CD8-positive, alpha-beta T cell (primary cell): ENCODE measurements at regions of chr12 and their contacts with region 1.

Region 1: DNA sequence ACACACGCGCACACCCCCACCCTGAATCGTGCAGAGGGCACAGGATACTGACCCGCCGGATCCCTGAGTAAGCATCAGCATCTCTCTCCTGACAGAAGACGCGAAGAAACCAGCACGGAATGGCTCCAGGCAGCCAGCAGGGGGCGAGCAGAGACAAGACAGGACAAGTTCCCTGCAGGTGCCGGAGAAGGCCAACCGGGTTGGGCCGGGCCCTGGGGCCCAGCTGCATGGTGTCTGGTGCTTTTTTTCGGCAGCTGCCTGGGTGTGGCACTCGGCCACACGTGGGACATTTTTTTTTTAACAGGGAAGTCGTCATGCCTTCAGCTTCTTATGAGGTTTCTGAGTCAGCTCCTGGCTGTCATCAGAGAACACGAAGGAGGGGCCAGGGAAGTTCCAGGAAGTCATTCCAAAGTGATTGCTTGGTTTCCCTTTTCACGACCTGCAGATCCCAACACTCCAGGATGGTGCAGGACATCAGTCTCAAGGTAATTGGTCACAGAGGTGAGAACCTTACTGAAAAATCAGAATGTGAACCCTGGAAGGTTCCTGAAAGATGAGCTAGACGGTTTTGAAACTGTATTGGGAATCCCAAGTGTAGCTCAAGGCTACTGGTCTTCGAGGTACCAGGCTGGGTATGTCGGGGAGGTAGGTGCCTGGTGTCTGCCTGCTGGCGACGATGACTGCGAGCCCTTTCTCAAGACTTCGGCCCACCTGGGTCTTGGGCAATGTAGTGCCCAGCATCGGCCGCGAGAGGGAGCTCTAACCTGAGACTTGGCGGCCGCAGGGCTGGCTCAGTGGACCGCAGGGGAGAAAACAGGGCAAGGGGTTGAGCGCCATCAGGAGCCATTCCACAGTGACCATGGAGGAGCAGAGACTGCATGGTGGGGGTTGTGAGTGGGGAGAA is 190.8 kb upstream of the PRMT8 start:
- DNase-seq: peak; percentile 58 to 83 (median 77)
- ATAC-seq: peak; percentile 84
- H3K4me3 ChIP-seq: peak overlapping the region; percentile 4
- H3K4me3 Mint-ChIP-seq: peak overlapping the region; percentile 57
- H3K27ac ChIP-seq: no peak overlapping the region
- H3K27ac Mint-ChIP-seq: peak overlapping the region; percentile 70
- H3K4me1 ChIP-seq: peaks cover 9% of the 10 kb centered on the region
- H3K4me1 Mint-ChIP-seq: peaks cover 10% of the 10 kb centered on the region
- H3K27me3 ChIP-seq: no peaks in the 10 kb centered on the region
- H3K27me3 Mint-ChIP-seq: peaks cover 11% of the 10 kb centered on the region
- CTCF ChIP-seq: peak; percentile 78

Region 2: GRCh38 chr12:3275171-3276041 is 24.8 kb before region 1 on chr12:
- CTCF ChIA-PET with region 1: interaction called, 51 read pairs
- POLR2A ChIA-PET with region 1: no interaction called
- intact Hi-C with region 1: no loop called
- DNase-seq: peak; percentile 40 to 84 (median 64)
- ATAC-seq: peak; percentile 58
- H3K4me3 ChIP-seq: no peak overlapping the region
- H3K4me3 Mint-ChIP-seq: peak overlapping the region; percentile 22
- H3K27ac ChIP-seq: no peak overlapping the region
- H3K27ac Mint-ChIP-seq: no peak overlapping the region
- H3K4me1 ChIP-seq: no peaks in the 10 kb centered on the region
- H3K4me1 Mint-ChIP-seq: no peaks in the 10 kb centered on the region
- H3K27me3 ChIP-seq: no peaks in the 10 kb centered on the region
- H3K27me3 Mint-ChIP-seq: peaks cover 21% of the 10 kb centered on the region
- CTCF ChIP-seq: peak; percentile 89

Region 3: GRCh38 chr12:3288690-3289089 is 11.5 kb before region 1 on chr12:
- CTCF ChIA-PET with region 1: interaction called, 49 read pairs
- POLR2A ChIA-PET with region 1: no interaction called
- intact Hi-C with region 1: no loop called
- DNase-seq: no peak
- ATAC-seq: no peak
- H3K4me3 ChIP-seq: no peak overlapping the region
- H3K4me3 Mint-ChIP-seq: no peak overlapping the region
- H3K27ac ChIP-seq: no peak overlapping the region
- H3K27ac Mint-ChIP-seq: peak overlapping the region; percentile 49
- H3K4me1 ChIP-seq: no peaks in the 10 kb centered on the region
- H3K4me1 Mint-ChIP-seq: no peaks in the 10 kb centered on the region
- H3K27me3 ChIP-seq: no peaks in the 10 kb centered on the region
- H3K27me3 Mint-ChIP-seq: no peaks in the 10 kb centered on the region
- CTCF ChIP-seq: no peak

Region 4: GRCh38 chr12:3313675-3314663 is 13.8 kb after region 1 on chr12:
- CTCF ChIA-PET with region 1: interaction called, 80 read pairs
- POLR2A ChIA-PET with region 1: no interaction called
- intact Hi-C with region 1: no loop called
- DNase-seq: peak in 4 of 9 experiments; percentile 25 to 47 (median 32)
- ATAC-seq: no peak
- H3K4me3 ChIP-seq: no peak overlapping the region
- H3K4me3 Mint-ChIP-seq: no peak overlapping the region
- H3K27ac ChIP-seq: no peak overlapping the region
- H3K27ac Mint-ChIP-seq: no peak overlapping the region
- H3K4me1 ChIP-seq: no peaks in the 10 kb centered on the region
- H3K4me1 Mint-ChIP-seq: no peaks in the 10 kb centered on the region
- H3K27me3 ChIP-seq: no peaks in the 10 kb centered on the region
- H3K27me3 Mint-ChIP-seq: no peaks in the 10 kb centered on the region
- CTCF ChIP-seq: no peak

Region 5: DNA sequence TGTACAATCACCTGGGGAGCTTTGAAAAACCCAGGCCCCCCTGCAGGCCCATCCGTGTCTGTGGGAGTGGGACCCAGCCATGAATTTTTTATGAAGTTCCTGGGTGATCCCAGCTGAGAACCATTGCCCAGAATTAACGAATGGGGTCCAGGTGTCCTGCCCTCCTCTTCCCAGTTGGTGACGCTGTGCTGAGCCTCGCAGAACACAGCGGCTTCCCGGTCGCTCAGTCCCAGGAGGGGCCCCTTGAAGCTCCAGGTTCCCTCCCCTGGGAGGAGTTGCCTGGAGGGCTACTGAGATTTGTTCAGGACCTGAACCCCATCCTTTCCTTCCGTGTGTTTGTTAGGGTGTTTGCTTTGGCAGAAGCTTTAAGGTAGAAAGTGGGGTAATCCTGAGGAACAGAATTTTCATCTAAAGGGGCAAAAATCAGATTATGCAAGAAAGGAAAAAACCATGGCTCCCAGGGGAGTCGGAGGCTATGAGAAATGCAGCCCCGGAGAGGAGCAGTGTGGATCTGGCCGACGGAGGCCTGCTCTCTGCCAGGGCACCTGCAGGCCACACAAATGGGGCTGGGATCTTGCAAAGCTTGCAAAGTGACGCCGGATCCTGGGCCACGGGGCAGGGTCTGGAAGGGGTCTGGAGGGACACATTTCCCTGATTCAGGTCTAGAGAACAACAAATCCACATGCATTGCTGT is 26.1 kb after region 1 on chr12:
- CTCF ChIA-PET with region 1: interaction called, 16 read pairs
- POLR2A ChIA-PET with region 1: no interaction called
- intact Hi-C with region 1: no loop called
- DNase-seq: no peak
- ATAC-seq: no peak
- H3K4me3 ChIP-seq: no peak overlapping the region
- H3K4me3 Mint-ChIP-seq: no peak overlapping the region
- H3K27ac ChIP-seq: no peak overlapping the region
- H3K27ac Mint-ChIP-seq: no peak overlapping the region
- H3K4me1 ChIP-seq: no peaks in the 10 kb centered on the region
- H3K4me1 Mint-ChIP-seq: no peaks in the 10 kb centered on the region
- H3K27me3 ChIP-seq: no peaks in the 10 kb centered on the region
- H3K27me3 Mint-ChIP-seq: peaks cover 4% of the 10 kb centered on the region
- CTCF ChIP-seq: no peak

Region 6: GRCh38 chr12:3350422-3350821 is 50.2 kb after region 1 on chr12:
- CTCF ChIA-PET with region 1: no interaction called
- POLR2A ChIA-PET with region 1: no interaction called
- intact Hi-C with region 1: no loop called
- DNase-seq: no peak
- ATAC-seq: no peak
- H3K4me3 ChIP-seq: no peak overlapping the region
- H3K4me3 Mint-ChIP-seq: no peak overlapping the region
- H3K27ac ChIP-seq: no peak overlapping the region
- H3K27ac Mint-ChIP-seq: no peak overlapping the region
- H3K4me1 ChIP-seq: no peaks in the 10 kb centered on the region
- H3K4me1 Mint-ChIP-seq: no peaks in the 10 kb centered on the region
- H3K27me3 ChIP-seq: no peaks in the 10 kb centered on the region
- H3K27me3 Mint-ChIP-seq: peaks cover 7% of the 10 kb centered on the region
- CTCF ChIP-seq: no peak

Region 7: GRCh38 chr12:3777206-3777809 is 477.1 kb after region 1 on chr12:
- CTCF ChIA-PET with region 1: interaction called, 32 read pairs
- POLR2A ChIA-PET with region 1: interaction called, 3 read pairs
- intact Hi-C with region 1: loop called in 1 of 2 experiments (anchors 1 kb)
- DNase-seq: peak in 3 of 9 experiments; percentile 7 to 63 (median 54)
- ATAC-seq: peak; percentile 57
- H3K4me3 ChIP-seq: no peak overlapping the region
- H3K4me3 Mint-ChIP-seq: no peak overlapping the region
- H3K27ac ChIP-seq: no peak overlapping the region
- H3K27ac Mint-ChIP-seq: no peak overlapping the region
- H3K4me1 ChIP-seq: no peaks in the 10 kb centered on the region
- H3K4me1 Mint-ChIP-seq: peaks cover 4% of the 10 kb centered on the region
- H3K27me3 ChIP-seq: no peaks in the 10 kb centered on the region
- H3K27me3 Mint-ChIP-seq: no peaks in the 10 kb centered on the region
- CTCF ChIP-seq: peak; percentile 71

Region 8: GRCh38 chr12:3803865-3804472 is 503.8 kb after region 1 on chr12:
- CTCF ChIA-PET with region 1: interaction called, 148 read pairs
- POLR2A ChIA-PET with region 1: no interaction called
- intact Hi-C with region 1: loop called (anchors 1 kb)
- DNase-seq: peak; percentile 39 to 80 (median 73)
- ATAC-seq: peak; percentile 77
- H3K4me3 ChIP-seq: no peak overlapping the region
- H3K4me3 Mint-ChIP-seq: no peak overlapping the region
- H3K27ac ChIP-seq: no peak overlapping the region
- H3K27ac Mint-ChIP-seq: no peak overlapping the region
- H3K4me1 ChIP-seq: no peaks in the 10 kb centered on the region
- H3K4me1 Mint-ChIP-seq: no peaks in the 10 kb centered on the region
- H3K27me3 ChIP-seq: no peaks in the 10 kb centered on the region
- H3K27me3 Mint-ChIP-seq: no peaks in the 10 kb centered on the region
- CTCF ChIP-seq: peak; percentile 77